ENCODE measurements at regions of chr16 and their contacts with region 1.

Region 1: GRCh38 chr16:4766874-4767628 is at the start of gene ZNF500:
- DNase-seq: peak; percentile 98
- H3K4me3 Mint-ChIP-seq: peak within 1 kb of the TSS; percentile 90
- H3K27ac Mint-ChIP-seq: peak within 1 kb of the TSS; percentile 93
- H3K4me1 Mint-ChIP-seq: peaks cover 35% of the 10 kb centered on the region
- H3K27me3 Mint-ChIP-seq: no peaks in the 10 kb centered on the region
- total RNA-seq, gene ZNF500: 11.3 to 11.4 TPM

Region 2: GRCh38 chr16:4350787-4351659 is 416.0 kb before region 1 on chr16 and contains the start of gene PAM16:
- CTCF ChIA-PET with region 1: no interaction called
- POLR2A ChIA-PET with region 1: no interaction called
- intact Hi-C with region 1: loop called (anchors 1 kb)
- DNase-seq: peak; percentile 99
- H3K4me3 Mint-ChIP-seq: peak within 1 kb of the TSS; percentile 97
- H3K27ac Mint-ChIP-seq: peak within 1 kb of the TSS; percentile 89
- H3K4me1 Mint-ChIP-seq: peaks cover 29% of the 10 kb centered on the region
- H3K27me3 Mint-ChIP-seq: no peaks in the 10 kb centered on the region
- total RNA-seq, gene PAM16: 52.8 to 63.4 TPM

Region 3: GRCh38 chr16:4425378-4426020 is 341.6 kb before region 1 on chr16 and contains the start of gene DNAJA3:
- CTCF ChIA-PET with region 1: no interaction called
- POLR2A ChIA-PET with region 1: no interaction called
- intact Hi-C with region 1: no loop called
- DNase-seq: peak; percentile 94
- H3K4me3 Mint-ChIP-seq: peak within 1 kb of the TSS; percentile 94
- H3K27ac Mint-ChIP-seq: peak within 1 kb of the TSS; percentile 100
- H3K4me1 Mint-ChIP-seq: peaks cover 27% of the 10 kb centered on the region
- H3K27me3 Mint-ChIP-seq: no peaks in the 10 kb centered on the region
- total RNA-seq, gene DNAJA3: 74.6 to 75.0 TPM

Region 4: DNA sequence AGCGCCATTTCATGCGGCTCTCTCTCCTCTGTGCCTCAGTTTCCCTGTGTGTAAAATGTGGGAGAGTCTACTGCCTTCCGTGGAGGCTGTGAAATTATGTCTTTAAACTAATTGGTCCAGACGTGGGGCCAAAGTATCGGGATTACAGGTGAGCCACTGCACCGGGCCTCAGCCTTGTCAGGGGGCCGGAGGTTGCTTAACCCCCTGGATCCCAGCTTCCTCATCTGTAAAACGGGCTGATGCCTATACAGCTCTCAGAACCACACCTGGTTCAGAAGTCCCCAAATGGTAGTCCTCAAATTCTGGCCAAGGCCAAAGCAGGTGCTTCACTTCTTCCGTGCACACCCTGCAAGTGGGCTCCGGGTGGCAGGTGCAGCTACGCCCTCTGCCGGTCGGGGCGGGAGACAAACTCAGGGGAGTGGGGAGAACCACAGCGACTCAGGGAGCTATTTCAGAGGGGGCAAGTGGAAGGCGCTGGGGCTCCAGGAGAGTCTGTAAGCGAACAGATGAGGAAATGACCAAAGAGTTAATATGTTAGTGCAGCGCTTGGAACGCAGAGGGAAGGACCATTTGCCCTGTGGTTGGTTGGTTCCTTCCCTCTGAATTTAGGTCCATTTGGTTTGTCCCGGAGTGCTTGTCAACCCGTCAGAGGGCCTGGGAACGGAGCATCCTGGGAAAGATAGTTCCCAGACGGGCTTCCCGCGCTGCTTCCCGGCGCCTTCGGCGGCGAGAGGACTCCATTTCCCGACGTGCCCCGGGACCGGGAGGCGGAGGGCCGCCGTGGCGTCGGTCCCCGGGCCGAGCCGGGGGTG is 142.8 kb before region 1 on chr16 and contains the start of gene MGRN1:
- CTCF ChIA-PET with region 1: interaction called, 3 read pairs
- POLR2A ChIA-PET with region 1: no interaction called
- intact Hi-C with region 1: loop called (anchors 2 kb)
- DNase-seq: peak; percentile 96
- H3K4me3 Mint-ChIP-seq: peak within 1 kb of the TSS; percentile 99
- H3K27ac Mint-ChIP-seq: peak within 1 kb of the TSS; percentile 98
- H3K4me1 Mint-ChIP-seq: peaks cover 28% of the 10 kb centered on the region
- H3K27me3 Mint-ChIP-seq: no peaks in the 10 kb centered on the region
- total RNA-seq, gene MGRN1: 72.7 to 73.2 TPM

Region 5: DNA sequence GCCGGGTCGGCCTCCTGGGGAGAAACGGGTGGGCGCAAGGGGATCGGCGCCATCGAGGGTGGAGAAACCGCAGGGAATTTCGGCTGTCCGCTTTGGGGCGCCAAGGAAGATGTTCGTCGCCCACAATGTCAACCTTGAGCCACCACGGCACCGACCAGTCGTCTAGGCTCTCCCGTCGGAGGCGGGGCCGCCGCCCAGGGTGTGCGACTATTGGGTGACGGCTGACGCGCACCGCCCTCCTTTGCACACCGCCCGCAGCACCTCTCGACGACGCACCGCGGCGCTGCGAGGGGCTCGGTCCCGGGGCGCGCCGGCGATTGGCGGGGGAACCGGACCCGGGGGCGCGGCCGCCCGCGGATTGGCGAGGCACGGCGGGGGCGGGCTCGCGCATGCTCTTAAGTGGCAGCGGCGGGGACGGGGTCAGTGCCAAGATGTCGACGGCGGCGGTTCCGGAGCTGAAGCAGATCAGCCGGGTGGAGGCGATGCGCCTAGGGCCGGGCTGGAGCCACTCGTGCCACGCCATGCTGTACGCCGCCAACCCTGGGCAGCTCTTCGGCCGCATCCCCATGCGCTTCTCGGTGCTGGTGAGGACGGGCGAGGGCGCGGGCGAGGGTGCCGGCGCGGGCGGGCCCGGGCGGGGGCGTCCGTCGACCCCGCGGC is 73.6 kb before region 1 on chr16 and contains the start of gene NUDT16L1:
- CTCF ChIA-PET with region 1: no interaction called
- POLR2A ChIA-PET with region 1: no interaction called
- intact Hi-C with region 1: loop called (anchors 2 kb)
- DNase-seq: peak; percentile 98
- H3K4me3 Mint-ChIP-seq: peak within 1 kb of the TSS; percentile 79
- H3K27ac Mint-ChIP-seq: peak within 1 kb of the TSS; percentile 69
- H3K4me1 Mint-ChIP-seq: peaks cover 13% of the 10 kb centered on the region
- H3K27me3 Mint-ChIP-seq: no peaks in the 10 kb centered on the region
- total RNA-seq, gene NUDT16L1: 22.2 to 23.6 TPM

Region 6: GRCh38 chr16:4709481-4709880 is 57.6 kb before region 1 on chr16:
- CTCF ChIA-PET with region 1: no interaction called
- POLR2A ChIA-PET with region 1: no interaction called
- intact Hi-C with region 1: no loop called
- DNase-seq: no peak
- H3K4me3 Mint-ChIP-seq: no peak overlapping the region
- H3K27ac Mint-ChIP-seq: no peak overlapping the region
- H3K4me1 Mint-ChIP-seq: no peaks in the 10 kb centered on the region
- H3K27me3 Mint-ChIP-seq: no peaks in the 10 kb centered on the region

Region 7: DNA sequence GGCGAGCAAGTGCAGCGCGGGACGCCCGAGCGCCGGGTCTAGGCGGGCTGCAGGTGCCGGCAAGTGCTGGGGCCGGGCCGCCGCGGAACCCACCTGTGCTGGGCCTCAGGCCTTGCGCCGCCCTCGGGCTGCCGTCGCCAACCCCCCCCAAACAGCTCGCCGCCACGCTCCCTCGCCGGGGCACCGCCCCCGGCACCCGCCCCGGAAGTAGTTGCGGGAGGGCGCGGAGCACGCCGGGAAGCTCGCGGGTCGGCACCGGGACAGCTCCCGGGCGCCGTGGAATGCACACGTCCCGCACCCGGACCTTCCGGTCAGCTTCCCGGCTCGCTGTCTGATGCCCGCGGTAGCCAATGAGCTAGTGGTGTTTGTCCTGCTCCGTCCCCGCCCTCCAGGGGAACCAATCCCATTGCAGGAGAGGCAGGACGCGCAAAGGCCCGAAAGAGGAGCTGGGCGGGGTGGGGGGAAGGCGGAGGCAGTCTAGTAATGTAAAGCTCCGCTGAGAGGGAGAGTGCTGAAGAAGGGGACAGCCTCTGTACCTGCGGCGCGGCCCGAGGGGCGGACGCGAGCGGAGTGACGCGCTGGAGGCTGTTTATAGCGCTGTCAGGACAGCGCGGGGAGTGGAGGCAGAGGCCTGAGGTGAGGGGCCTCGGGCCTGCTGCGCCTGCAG is 32.9 kb before region 1 on chr16 and contains the starts of genes ANKS3 and DNAAF8:
- CTCF ChIA-PET with region 1: interaction called, 10 read pairs
- POLR2A ChIA-PET with region 1: interaction called, 9 read pairs
- intact Hi-C with region 1: loop called (anchors 1 kb)
- DNase-seq: peak; percentile 86
- H3K4me3 Mint-ChIP-seq: peak within 1 kb of the TSS; percentile 86
- H3K27ac Mint-ChIP-seq: peak within 1 kb of the TSS; percentile 69
- H3K4me1 Mint-ChIP-seq: peaks cover 17% of the 10 kb centered on the region
- H3K27me3 Mint-ChIP-seq: no peaks in the 10 kb centered on the region
- total RNA-seq, gene ANKS3: 11.7 to 13.3 TPM
- total RNA-seq, gene DNAAF8: 0.31 TPM in 1 of 2 experiments, not detected in the other

Region 8: DNA sequence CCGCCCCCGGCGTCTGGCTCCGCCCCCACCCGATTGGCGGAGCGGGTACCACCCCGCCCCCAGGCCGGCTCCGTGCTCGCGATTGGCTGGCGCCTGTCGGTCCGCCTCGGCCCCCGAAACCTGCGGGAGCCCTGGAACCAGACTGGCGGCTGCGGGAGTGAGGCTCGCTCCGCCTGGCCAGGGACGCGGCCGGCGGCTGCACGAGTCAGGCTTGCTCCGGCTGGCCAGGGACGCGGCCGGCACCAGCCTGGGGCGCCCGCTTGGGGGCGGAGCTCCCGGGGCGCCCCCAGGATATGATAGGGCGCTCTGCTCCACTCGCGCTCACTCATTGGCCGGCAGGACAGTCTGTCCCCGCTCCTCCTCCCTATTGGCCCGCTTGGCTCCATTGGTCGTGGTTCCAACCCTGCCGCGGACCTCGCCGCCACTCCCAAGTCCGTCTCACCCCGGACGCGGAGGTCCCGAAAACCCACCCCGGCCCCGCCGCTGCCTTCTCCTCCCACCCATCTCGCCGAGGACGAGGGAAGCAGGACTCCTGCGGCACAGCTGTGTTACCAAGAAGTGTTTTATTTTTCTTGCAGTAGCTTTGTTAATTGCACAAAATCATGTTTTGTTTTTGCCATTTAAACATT is 35.7 kb after region 1 on chr16:
- CTCF ChIA-PET with region 1: no interaction called
- POLR2A ChIA-PET with region 1: interaction called, 3 read pairs
- intact Hi-C with region 1: loop called (anchors 1 kb)
- DNase-seq: peak; percentile 90
- H3K4me3 Mint-ChIP-seq: peak overlapping the region; percentile 75
- H3K27ac Mint-ChIP-seq: no peak overlapping the region
- H3K4me1 Mint-ChIP-seq: peaks cover 9% of the 10 kb centered on the region
- H3K27me3 Mint-ChIP-seq: no peaks in the 10 kb centered on the region

Region 9: DNA sequence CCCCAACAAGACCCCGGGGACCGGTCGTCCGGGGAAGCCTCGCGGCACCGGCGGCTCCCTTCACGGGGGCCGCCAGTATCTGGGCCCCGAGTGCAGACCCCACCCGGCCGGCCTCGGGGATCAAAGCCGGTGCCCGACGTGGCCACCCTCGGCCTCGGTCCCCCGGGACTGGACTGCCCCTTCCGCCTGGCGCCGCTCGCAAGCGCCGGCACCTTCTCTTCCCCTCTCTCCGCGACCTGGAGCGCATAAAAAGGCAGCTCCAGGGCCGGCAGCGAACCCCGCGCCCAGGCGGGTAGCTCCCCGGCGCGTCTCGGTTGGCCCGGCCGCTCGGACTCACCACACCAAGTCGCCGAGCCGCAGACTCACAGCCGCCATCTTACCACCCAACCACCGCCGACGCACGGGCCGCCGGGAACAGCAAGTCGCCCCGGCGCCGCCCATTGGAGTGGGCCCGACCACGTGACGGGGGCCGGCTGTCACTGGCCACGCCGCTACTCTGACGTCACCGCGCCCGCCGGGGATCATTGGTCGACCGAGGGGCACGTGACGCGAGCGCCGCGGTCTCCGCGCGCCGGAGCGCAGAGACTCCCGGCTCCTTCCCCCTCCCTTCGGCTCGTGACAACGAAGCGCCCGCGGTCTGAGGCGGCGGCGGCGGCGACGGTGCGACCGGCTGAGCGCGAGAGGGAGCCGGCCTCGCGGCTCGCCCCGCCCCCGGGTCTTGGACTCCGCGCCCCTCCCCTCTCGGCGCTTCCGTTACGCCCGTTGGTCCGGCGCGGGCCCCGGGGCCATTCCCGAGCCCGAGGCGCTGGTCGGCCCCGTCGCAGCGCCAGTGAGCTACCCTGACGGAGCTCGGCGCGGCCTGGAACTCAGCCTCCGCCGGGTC is 80.1 kb after region 1 on chr16 and contains the starts of genes GLYR1 and UBN1:
- CTCF ChIA-PET with region 1: no interaction called
- POLR2A ChIA-PET with region 1: no interaction called
- intact Hi-C with region 1: loop called (anchors 1 kb)
- DNase-seq: peak; percentile 100
- H3K4me3 Mint-ChIP-seq: peak within 1 kb of the TSS; percentile 90
- H3K27ac Mint-ChIP-seq: peak within 1 kb of the TSS; percentile 79
- H3K4me1 Mint-ChIP-seq: peaks cover 52% of the 10 kb centered on the region
- H3K27me3 Mint-ChIP-seq: no peaks in the 10 kb centered on the region
- total RNA-seq, gene GLYR1: 71.6 to 73.3 TPM
- total RNA-seq, gene UBN1: 24.4 TPM

Measured in activated CD4-positive, alpha-beta memory T cell treated with anti-CD3 and anti-CD28 coated beads for 36 hours (primary cell).